ENCODE measurements at regions of chr7 and their contacts with region 1.

Region 1: GRCh38 chr7:101542527-101543241 is 86.4 kb downstream of the MYL10 start:
- DNase-seq: peak; percentile 53 to 73
- ATAC-seq: peak; percentile 50 to 82 (median 68)
- H3K4me3 ChIP-seq: no peak overlapping the region
- H3K27ac ChIP-seq: no peak overlapping the region
- H3K4me1 ChIP-seq: no peaks in the 10 kb centered on the region
- H3K27me3 ChIP-seq: no peaks in the 10 kb centered on the region
- CTCF ChIP-seq: peak; percentile 89

Region 2: DNA sequence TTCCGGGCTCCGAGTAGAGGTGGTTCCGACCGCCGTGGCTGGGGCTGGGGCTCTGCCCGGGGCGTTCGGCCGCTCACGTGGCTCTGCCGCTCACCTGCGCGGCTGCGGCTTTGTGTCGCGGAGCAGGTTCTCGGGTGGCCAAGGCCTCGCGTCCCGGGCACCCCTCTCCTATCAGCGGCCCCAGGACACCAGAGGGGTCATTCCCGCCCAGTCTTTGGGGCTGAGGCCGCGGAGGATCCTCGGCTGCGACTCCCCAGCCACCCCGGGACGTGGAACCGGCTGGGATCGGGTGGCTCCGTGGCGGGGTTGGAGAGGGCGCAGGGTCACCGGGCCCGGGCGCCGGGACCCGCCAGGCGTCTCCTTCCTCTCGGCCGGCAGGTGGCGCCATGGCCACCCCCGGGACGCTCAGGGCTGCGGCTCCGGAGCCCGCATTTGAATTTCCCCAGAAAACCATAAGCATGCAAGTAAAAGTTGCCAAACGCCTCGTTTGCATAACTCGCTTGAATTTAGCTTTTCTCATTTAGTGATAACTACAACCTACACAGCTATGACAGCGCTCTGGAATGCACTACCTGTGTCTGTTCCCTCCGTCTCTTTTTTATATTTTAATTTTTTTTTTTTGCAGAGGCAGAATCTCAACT is 178.8 kb before region 1 on chr7:
- intact Hi-C with region 1: loop called (anchors 2 to 10 kb)
- DNase-seq: peak; percentile 63 to 78
- ATAC-seq: peak; percentile 84 to 97 (median 90)
- H3K4me3 ChIP-seq: peak overlapping the region; percentile 69
- H3K27ac ChIP-seq: no peak overlapping the region
- H3K4me1 ChIP-seq: no peaks in the 10 kb centered on the region
- H3K27me3 ChIP-seq: peaks cover 0 to 32% (median 9%) of the 10 kb centered on the region in 3 donors
- CTCF ChIP-seq: peak; percentile 88

Region 3: DNA sequence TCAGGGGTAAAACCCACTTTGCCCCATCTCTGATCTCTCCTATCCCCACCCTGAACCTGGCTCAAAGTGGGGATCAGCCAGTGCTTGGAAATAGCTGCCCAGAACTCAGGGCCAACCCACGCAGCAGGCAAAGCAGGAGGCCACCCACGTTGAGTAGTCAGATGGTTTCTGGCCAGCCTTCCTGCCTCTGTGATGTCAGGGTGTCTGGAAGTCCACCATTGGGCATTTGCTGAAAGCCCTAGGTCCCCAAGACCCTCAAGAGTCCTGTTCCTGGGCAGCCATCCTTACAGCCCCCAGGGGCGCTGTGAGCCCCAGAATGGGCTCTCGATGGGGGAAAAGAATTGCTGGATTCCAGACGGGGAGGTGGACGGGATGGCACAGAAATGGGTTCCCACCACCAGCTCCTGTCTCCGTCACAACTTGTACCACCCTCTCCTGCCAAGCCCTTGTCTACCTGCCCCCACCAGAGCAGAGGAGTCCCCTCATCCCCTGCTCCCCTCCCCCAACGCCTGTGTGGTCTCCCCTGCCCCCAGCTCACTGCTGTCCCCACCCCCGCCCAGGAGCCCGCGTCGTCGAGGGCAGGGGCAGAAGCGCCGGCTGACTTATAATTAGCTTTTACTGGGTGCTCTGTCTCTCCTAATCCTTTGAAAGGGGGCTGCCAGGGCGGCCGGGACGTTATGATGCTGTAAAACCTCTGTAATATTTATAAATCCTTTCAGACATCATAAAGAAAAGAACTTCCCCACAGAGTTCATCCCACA is 82.5 kb after region 1 on chr7:
- intact Hi-C with region 1: no loop called
- DNase-seq: no peak
- ATAC-seq: no peak
- H3K4me3 ChIP-seq: no peak overlapping the region
- H3K27ac ChIP-seq: no peak overlapping the region
- H3K4me1 ChIP-seq: peaks cover 13% of the 10 kb centered on the region
- H3K27me3 ChIP-seq: peaks cover 0 to 2% (median 0%) of the 10 kb centered on the region in 3 donors
- CTCF ChIP-seq: no peak

Region 4: GRCh38 chr7:102272075-102272917 is 729.6 kb after region 1 on chr7:
- intact Hi-C with region 1: loop called (anchors 1 kb)
- DNase-seq: peak; percentile 83 to 91
- ATAC-seq: peak; percentile 93 to 97 (median 96)
- H3K4me3 ChIP-seq: no peak overlapping the region
- H3K27ac ChIP-seq: no peak overlapping the region
- H3K4me1 ChIP-seq: no peaks in the 10 kb centered on the region
- H3K27me3 ChIP-seq: no peaks in the 10 kb centered on the region
- CTCF ChIP-seq: peak; percentile 95

Region 5: GRCh38 chr7:102390697-102391484 is 848.2 kb after region 1 on chr7:
- intact Hi-C with region 1: loop called in 1 of 2 experiments (anchors 10 kb)
- DNase-seq: peak; percentile 84 to 92
- ATAC-seq: peak; percentile 87 to 91 (median 88)
- H3K4me3 ChIP-seq: no peak overlapping the region
- H3K27ac ChIP-seq: no peak overlapping the region
- H3K4me1 ChIP-seq: peaks cover 4% of the 10 kb centered on the region
- H3K27me3 ChIP-seq: no peaks in the 10 kb centered on the region
- CTCF ChIP-seq: peak; percentile 96

Measured in psoas muscle (tissue), 8 donors.